ENCODE measurements at regions of chr11 and their contacts with region 1.

Region 1: GRCh38 chr11:31958076-31958735 is 132.7 kb upstream of the RCN1 start:
- DNase-seq: peak; percentile 76
- H3K4me3 Mint-ChIP-seq: no peak overlapping the region
- H3K27ac Mint-ChIP-seq: no peak overlapping the region
- H3K4me1 Mint-ChIP-seq: no peaks in the 10 kb centered on the region
- H3K27me3 Mint-ChIP-seq: no peaks in the 10 kb centered on the region

Region 2: GRCh38 chr11:31340903-31341572 is 617.2 kb before region 1 on chr11:
- CTCF ChIA-PET with region 1: interaction called, 5 read pairs
- intact Hi-C with region 1: loop called (anchors 5 kb)
- DNase-seq: peak; percentile 15
- H3K4me3 Mint-ChIP-seq: no peak overlapping the region
- H3K27ac Mint-ChIP-seq: no peak overlapping the region
- H3K4me1 Mint-ChIP-seq: no peaks in the 10 kb centered on the region
- H3K27me3 Mint-ChIP-seq: peaks cover 16% of the 10 kb centered on the region

Region 3: GRCh38 chr11:31397239-31397834 is 560.9 kb before region 1 on chr11:
- CTCF ChIA-PET with region 1: interaction called, 10 read pairs
- intact Hi-C with region 1: loop called (anchors 2 kb)
- DNase-seq: no peak
- H3K4me3 Mint-ChIP-seq: no peak overlapping the region
- H3K27ac Mint-ChIP-seq: no peak overlapping the region
- H3K4me1 Mint-ChIP-seq: no peaks in the 10 kb centered on the region
- H3K27me3 Mint-ChIP-seq: no peaks in the 10 kb centered on the region

Region 4: DNA sequence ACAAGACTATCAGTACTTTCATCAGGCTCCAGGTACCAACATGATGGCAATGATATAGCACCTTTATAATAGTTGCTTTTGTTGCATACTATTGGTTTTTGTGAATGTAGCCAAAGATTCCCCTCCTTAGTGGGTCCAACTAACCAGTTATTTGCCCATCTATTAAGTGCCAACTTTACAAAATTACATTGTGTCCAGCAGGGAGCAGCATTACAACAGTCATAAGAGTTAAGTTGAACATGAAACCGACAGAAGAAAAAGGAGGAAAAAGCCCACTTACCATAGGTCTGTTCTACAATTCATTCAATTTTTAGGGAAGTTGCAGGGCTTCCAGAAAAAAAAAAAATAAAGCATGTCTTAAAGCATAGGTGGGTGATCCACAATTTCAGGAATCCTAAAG is 470.4 kb before region 1 on chr11:
- CTCF ChIA-PET with region 1: interaction called, 5 read pairs
- intact Hi-C with region 1: loop called (anchors 1 kb)
- DNase-seq: peak; percentile 6
- H3K4me3 Mint-ChIP-seq: no peak overlapping the region
- H3K27ac Mint-ChIP-seq: no peak overlapping the region
- H3K4me1 Mint-ChIP-seq: peaks cover 11% of the 10 kb centered on the region
- H3K27me3 Mint-ChIP-seq: no peaks in the 10 kb centered on the region

Region 5: DNA sequence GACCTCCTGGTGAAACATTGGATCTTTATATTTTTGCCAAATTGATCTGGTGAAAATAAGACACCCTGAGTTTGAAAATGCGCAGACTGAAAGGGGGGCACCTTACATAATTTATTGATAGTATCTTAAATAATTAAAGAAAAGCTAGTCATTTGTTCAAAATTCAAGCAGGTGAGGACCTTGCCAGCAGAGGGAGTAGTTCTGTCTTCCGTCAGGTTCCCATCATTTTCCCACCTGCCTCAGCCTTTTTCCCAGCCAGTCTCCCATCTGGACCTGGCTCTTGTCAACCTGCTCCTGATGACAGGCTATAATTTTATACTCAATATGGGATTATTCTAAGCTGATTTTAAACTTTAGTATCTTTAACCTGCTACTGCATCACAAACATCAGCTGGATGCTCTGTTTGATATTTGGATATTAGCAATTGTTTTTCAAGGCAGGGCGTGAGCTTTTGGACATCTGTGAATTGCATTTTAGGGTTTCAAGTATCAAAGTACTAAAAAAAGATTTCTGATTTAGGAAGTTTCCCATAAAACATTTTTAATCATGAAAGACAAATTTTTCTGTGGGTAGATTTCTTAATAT is 316.6 kb before region 1 on chr11:
- CTCF ChIA-PET with region 1: interaction called, 3 read pairs
- intact Hi-C with region 1: loop called (anchors 5 kb)
- DNase-seq: peak; percentile 6
- H3K4me3 Mint-ChIP-seq: no peak overlapping the region
- H3K27ac Mint-ChIP-seq: no peak overlapping the region
- H3K4me1 Mint-ChIP-seq: no peaks in the 10 kb centered on the region
- H3K27me3 Mint-ChIP-seq: no peaks in the 10 kb centered on the region

Region 6: DNA sequence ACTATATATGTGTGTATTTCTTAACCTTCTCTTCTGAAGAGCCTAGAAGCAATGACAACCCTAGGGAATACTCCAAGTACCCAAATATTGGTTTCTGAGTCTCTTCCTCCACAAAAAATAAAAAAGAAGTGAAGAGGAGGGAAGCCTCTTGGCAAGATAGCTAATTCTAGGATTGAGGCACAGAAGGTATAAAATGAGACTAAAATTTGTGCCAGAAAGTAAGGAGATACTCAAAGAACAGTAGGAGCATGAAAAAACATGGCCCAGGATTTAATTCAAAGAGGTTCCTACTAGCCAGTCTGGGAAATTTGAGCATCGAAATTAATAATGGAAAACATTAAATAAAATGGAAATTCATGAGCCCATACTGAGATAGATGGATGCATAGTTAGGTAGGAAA is 259.1 kb before region 1 on chr11:
- CTCF ChIA-PET with region 1: no interaction called
- intact Hi-C with region 1: no loop called
- DNase-seq: no peak
- H3K4me3 Mint-ChIP-seq: no peak overlapping the region
- H3K27ac Mint-ChIP-seq: no peak overlapping the region
- H3K4me1 Mint-ChIP-seq: peaks cover 9% of the 10 kb centered on the region
- H3K27me3 Mint-ChIP-seq: no peaks in the 10 kb centered on the region

Region 7: DNA sequence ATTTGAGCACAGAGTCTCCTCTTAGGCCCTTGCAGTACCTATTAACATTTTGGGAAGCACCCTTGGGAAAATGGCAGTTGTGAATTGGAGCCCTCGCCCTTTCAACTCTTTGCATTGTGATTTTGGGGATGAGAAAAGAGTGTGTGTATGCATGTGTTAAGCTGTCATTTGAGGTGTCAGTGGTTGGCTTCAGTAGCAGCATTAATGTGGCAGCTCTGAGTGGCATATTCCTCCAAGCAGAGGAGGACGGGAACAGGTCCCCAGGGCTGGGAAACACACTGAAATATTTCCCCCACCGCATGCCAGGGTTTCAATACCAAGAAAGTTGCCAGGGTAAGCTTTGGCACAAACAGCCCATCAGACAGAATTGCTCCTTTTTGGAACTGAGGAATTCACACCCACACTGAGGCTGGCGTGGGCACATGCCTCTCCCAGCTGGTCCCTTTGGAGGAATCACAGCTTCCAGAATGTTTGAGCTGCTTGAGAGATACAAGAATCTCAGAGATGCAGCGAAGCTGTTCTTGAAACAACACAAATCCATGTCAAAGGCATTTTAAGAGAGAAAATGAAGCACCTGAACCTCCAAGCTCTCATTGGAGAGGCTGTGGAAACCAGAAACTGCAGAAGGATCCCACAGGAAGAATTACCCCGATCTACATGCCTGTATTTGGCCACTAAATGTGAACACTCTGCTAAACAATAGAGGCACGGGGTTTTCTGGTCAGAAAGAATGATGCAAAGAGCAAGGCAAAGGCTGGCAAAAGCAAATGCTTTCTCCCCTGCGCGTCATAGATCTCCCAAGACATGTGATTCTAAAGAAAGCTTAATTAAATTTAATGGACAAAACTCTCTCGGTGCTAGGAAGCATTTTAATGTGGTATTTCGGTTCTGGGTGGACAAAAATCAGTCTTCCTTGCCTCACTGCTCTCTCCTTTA is 65.4 kb after region 1 on chr11:
- CTCF ChIA-PET with region 1: no interaction called
- intact Hi-C with region 1: no loop called
- DNase-seq: no peak
- H3K4me3 Mint-ChIP-seq: no peak overlapping the region
- H3K27ac Mint-ChIP-seq: no peak overlapping the region
- H3K4me1 Mint-ChIP-seq: no peaks in the 10 kb centered on the region
- H3K27me3 Mint-ChIP-seq: peaks cover 7% of the 10 kb centered on the region